Upper lobe of right lung (tissue), 1 donor: ENCODE measurements at regions of chr7 and their contacts with region 1.

Region 1: DNA sequence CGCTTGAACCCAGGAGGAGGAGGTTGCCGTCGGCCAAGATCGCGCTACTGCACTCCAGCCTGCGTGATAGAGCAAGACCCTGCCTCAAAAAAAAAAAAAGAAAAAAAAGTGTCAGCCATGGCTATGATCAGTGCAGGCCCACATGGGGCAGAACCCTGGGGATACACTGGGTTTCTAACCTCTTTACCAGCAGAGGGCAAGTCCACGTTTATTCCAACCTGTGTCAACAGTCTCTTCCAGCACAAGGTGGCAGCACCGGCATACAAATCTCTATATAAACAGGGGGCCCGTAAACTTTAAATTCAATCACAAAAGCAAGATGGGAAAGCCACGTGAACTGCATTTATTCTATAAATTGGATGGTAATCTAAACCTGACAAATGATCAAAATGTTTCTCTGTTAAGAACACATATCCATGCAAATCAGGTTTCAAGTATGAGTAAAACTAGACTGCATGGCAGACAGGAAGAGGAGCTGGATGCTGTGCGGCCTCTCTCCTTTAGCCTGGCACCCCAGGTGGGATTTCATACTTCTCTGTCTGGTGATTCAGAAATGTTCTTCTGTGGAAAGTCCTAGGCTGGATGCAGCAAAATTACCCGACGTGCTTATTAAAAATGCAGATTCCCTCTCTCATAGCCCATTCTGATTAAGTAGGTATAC is 60.0 kb upstream of the STEAP1B start:
- DNase-seq: no peak
- ATAC-seq: peak; percentile 89
- H3K4me3 ChIP-seq: no peak overlapping the region
- H3K27ac ChIP-seq: no peak overlapping the region
- H3K4me1 ChIP-seq: peaks cover 44% of the 10 kb centered on the region
- H3K27me3 ChIP-seq: no peaks in the 10 kb centered on the region
- CTCF ChIP-seq: peak; percentile 81

Region 2: DNA sequence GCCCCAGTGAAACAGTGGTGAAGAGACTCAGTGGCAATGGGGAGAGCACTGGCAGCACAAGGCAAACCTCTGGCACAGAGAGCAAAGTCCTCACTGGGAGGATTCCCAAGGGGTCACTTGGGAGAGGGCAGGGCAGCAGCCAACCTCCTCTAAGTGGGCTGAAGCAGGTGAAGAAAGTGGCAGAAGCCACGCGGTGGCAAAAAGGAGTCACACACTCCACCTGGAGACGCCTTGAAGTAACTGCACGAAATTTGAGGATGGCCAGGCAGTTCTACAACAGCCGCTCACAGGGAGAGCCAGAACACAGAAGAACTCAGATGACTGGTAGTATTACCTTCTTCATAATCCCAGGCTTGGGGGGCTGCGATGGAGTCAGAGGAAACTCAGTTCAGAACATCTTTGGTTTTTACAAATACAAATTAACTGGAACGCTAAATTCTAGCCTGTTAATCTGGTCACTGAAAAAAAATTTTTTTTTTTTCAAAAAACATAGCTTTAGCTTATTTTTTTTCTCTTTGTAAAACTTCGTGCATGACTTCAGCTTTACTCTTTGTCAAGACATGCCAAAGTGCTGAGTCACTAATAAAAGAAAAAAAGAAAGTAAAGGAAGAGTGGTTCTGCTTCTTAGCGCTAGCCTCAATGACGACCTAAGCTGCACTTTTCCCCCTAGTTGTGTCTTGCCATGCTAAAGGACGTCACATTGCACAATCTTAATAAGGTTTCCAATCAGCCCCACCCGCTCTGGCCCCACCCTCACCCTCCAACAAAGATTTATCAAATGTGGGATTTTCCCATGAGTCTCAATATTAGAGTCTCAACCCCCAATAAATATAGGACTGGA is 166.6 kb after region 1 on chr7:
- intact Hi-C with region 1: loop called (anchors 5 kb)
- DNase-seq: peak; percentile 72
- ATAC-seq: peak; percentile 78
- H3K4me3 ChIP-seq: peak overlapping the region; percentile 51
- H3K27ac ChIP-seq: peak overlapping the region; percentile 81
- H3K4me1 ChIP-seq: peaks cover 41% of the 10 kb centered on the region
- H3K27me3 ChIP-seq: no peaks in the 10 kb centered on the region
- CTCF ChIP-seq: peak; percentile 61

Region 3: GRCh38 chr7:23055582-23056178 is 495.7 kb after region 1 on chr7:
- intact Hi-C with region 1: loop called (anchors 5 kb)
- DNase-seq: no peak
- ATAC-seq: peak; percentile 94
- H3K4me3 ChIP-seq: no peak overlapping the region
- H3K27ac ChIP-seq: no peak overlapping the region
- H3K4me1 ChIP-seq: no peaks in the 10 kb centered on the region
- H3K27me3 ChIP-seq: no peaks in the 10 kb centered on the region
- CTCF ChIP-seq: peak; percentile 92